Caco-2 (cell line): ENCODE measurements at regions of chr4 and their contacts with region 1.

Region 1: DNA sequence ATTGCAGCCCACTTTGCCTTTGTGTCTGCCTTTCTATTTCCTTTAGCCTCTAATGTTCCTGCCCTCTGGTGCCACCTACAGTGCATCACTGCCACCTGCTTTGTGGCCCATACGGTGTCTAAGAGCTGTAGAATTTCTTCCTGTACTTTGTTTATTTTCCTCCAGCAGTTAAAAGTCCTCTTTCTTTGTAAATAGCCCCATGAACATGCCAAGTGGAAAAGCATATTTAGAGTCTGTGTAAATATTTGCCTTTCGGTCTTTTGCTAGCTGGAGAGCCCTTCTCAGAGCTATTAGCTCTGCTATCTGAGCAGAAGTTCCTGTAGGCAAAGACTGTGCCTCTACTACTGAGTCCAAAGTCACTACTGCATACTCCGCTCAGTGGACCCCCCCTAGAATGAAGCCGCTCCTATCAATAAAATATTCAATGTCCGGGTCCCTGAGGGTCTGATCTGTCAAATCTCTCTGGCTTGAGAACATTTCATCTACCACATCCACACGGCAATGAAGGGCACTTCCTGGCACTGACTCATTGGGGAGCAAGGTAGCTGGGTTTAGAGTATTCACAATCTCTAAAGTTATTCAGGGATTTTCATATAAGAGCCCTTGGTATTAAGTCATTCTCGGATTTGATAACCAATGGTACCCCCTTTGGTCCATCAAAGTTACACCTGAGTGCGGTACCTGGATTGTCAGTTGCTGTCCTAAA is 36.3 kb downstream of the SULT1E1 start:
- DNase-seq: peak; percentile 76 to 82
- H3K4me3 ChIP-seq: no peak overlapping the region
- H3K4me3 Mint-ChIP-seq: no peak overlapping the region
- H3K27ac Mint-ChIP-seq: peak overlapping the region; percentile 75
- H3K4me1 ChIP-seq: peaks cover 23% of the 10 kb centered on the region
- H3K4me1 Mint-ChIP-seq: peaks cover 6% of the 10 kb centered on the region
- H3K27me3 ChIP-seq: no peaks in the 10 kb centered on the region
- H3K27me3 Mint-ChIP-seq: no peaks in the 10 kb centered on the region
- CTCF ChIP-seq: peak; percentile 56 to 73

Region 2: GRCh38 chr4:69689599-69689998 is 134.0 kb before region 1 on chr4:
- CTCF ChIA-PET with region 1: interaction called, 9 read pairs
- POLR2A ChIA-PET with region 1: no interaction called
- intact Hi-C with region 1: loop called (anchors 1 kb)
- DNase-seq: peak in 1 of 2 experiments; percentile 37
- H3K4me3 ChIP-seq: no peak overlapping the region
- H3K4me3 Mint-ChIP-seq: no peak overlapping the region
- H3K27ac Mint-ChIP-seq: no peak overlapping the region
- H3K4me1 ChIP-seq: peaks cover 11% of the 10 kb centered on the region; the same call in 1 of the 2 replicates
- H3K4me1 Mint-ChIP-seq: peaks cover 6% of the 10 kb centered on the region
- H3K27me3 ChIP-seq: no peaks in the 10 kb centered on the region
- H3K27me3 Mint-ChIP-seq: no peaks in the 10 kb centered on the region
- CTCF ChIP-seq: peak; percentile 47 to 71

Region 3: DNA sequence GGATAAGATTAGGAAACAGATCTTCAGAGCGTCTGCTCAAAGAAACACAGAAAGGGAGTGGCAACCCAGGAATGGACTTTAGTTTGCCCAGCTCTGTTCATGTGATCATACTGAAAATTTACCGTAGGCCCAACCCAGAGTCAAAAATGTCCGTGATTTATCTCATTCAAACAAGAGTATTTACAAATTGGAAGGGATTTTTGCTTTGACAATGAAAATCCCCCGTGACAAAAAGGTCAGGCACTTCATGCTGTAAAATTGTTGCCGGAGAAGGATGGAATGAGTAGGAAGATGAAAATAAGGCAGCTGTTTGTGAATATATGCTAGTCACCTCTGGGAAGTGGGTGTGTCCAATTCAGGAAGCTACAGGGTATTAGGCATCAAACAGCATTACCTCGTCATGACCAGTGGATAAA is 64.4 kb before region 1 on chr4:
- CTCF ChIA-PET with region 1: interaction called, 4 read pairs
- POLR2A ChIA-PET with region 1: no interaction called
- intact Hi-C with region 1: loop called (anchors 1 kb)
- DNase-seq: peak; percentile 53 to 70
- H3K4me3 ChIP-seq: 0 out of 2 replicates have a peak overlapping the region, but pooled peaks have one; percentile 5
- H3K4me3 Mint-ChIP-seq: peak overlapping the region; percentile 75
- H3K27ac Mint-ChIP-seq: peak overlapping the region; percentile 73
- H3K4me1 ChIP-seq: peaks cover 40% of the 10 kb centered on the region
- H3K4me1 Mint-ChIP-seq: peaks cover 23% of the 10 kb centered on the region
- H3K27me3 ChIP-seq: no peaks in the 10 kb centered on the region
- H3K27me3 Mint-ChIP-seq: no peaks in the 10 kb centered on the region
- CTCF ChIP-seq: no peak

Region 4: GRCh38 chr4:69843932-69844331 is 20.3 kb after region 1 on chr4:
- CTCF ChIA-PET with region 1: no interaction called
- POLR2A ChIA-PET with region 1: no interaction called
- intact Hi-C with region 1: no loop called
- DNase-seq: no peak
- H3K4me3 ChIP-seq: no peak overlapping the region
- H3K4me3 Mint-ChIP-seq: no peak overlapping the region
- H3K27ac Mint-ChIP-seq: no peak overlapping the region
- H3K4me1 ChIP-seq: no peaks in the 10 kb centered on the region
- H3K4me1 Mint-ChIP-seq: no peaks in the 10 kb centered on the region
- H3K27me3 ChIP-seq: no peaks in the 10 kb centered on the region
- H3K27me3 Mint-ChIP-seq: no peaks in the 10 kb centered on the region
- CTCF ChIP-seq: no peak